HEK293 (cell line): ENCODE measurements at regions of chr11 and their contacts with region 1.

Region 1: DNA sequence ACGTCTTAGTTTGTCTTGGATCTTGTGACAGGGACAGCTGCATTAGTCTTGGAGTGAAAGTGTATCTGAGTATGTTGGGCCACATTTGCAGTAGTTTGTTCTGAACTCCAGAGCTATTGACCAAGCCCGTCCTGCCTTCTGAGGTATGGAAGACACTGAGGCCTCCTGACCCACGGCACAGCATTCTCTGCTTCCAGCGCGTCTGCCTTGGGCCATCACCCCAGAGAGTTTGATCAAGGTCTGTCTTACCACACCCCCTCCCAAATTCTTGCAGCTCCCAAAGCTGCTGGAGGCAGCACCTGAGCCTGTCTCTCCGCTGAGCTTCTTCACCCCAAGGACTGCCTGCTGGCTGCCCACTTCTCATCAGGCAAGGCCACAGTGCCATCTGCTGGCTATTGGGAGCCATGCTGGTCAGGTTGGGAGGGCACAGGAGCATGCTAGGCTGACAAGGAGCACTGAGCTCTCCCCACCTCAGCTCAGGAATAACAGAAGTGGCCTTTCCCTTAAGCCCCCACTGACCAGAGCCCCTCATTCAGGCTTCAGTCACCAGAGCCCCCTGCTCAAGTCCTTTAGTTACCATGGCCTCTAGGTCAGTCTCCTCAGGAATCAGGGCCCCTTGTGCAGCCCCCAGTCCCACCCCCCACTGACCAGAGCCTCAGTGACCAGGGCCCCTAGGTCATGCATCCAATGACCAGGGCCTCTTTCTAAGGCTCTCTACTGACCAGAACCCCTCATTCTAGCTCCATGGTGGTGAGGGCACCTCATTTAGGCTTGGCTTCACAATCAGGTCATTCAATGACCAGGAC is 27.2 kb upstream of the SMPD1 start:
- H3K4me3 ChIP-seq: no peak overlapping the region
- H3K27ac ChIP-seq: no peak overlapping the region
- H3K4me1 ChIP-seq: no peaks in the 10 kb centered on the region
- CTCF ChIP-seq: peak; percentile 64

Region 2: DNA sequence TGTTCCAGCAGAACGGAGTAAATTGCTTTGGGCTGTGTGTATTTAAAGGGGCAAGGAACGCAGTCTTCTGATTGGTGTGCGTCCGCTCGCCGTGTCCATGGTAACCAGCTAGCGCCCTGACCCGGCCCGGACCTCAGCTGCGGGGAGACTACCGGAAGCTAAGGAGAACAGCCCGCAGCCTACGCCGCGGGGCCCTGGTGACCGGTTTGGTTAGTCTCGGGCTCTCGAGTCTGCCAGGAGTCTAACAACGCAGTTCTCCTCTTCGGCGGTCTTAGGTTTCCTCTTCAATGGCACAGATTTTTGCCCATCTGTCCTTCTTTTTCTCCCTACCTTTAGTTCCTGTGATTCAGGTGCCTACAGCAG is 424.5 kb before region 1 on chr11:
- CTCF ChIA-PET with region 1: no interaction called
- POLR2A ChIA-PET with region 1: no interaction called
- H3K4me3 ChIP-seq: no peak overlapping the region
- H3K27ac ChIP-seq: no peak overlapping the region
- H3K4me1 ChIP-seq: no peaks in the 10 kb centered on the region
- CTCF ChIP-seq: no peak

Region 3: DNA sequence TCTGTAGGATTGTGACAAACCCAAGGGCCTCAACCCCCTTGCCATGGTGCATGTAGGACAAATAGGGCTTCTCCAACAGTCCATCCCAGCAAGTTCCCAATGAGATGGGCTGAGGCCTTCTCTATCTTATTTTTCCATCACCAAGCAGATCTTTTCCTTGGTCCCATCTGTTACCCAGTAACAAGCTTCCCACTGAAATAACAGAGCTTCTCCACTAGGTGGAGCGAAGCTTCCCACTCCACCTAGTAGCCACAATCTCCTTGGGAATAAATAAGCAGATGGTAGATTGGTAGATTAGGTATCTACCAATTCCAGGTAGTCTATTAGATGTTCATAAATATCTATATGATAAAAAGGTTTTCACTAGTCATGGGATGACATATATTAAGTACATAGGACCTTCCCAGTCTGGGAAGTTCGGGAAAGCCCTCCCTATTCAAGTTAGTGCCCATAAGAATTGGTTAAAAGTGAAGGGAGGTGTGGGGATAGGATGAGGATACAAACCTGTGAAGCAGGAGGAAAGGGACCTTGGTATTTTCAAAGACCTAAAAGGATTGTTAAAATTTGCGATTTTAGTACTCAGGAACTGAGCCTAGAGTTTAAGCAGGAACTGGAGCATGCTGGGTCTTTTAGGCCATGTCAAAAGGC is 370.3 kb before region 1 on chr11:
- CTCF ChIA-PET with region 1: interaction called, 16 read pairs
- POLR2A ChIA-PET with region 1: no interaction called
- H3K4me3 ChIP-seq: no peak overlapping the region
- H3K27ac ChIP-seq: no peak overlapping the region
- H3K4me1 ChIP-seq: no peaks in the 10 kb centered on the region
- CTCF ChIP-seq: no peak

Region 4: DNA sequence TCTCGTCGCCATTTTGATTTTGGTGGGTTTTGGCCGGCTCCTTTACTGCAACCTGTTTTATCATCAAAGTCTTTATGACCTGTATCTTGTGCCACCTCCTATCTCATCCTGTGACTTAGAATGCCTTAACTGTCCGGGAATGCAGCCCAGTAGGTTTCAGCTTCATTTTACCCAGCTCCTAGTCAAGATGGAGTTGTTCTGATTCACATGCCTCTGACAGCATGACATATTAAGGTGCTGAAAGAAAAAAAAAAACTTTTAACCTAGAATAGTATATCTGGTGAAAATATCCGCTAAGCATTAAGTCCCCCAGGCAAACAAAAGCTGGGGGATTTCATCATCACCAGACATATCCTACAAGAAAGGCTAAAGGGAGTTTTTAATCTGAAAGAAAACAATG is 202.0 kb before region 1 on chr11:
- CTCF ChIA-PET with region 1: no interaction called
- POLR2A ChIA-PET with region 1: no interaction called
- H3K4me3 ChIP-seq: no peak overlapping the region
- H3K27ac ChIP-seq: no peak overlapping the region
- H3K4me1 ChIP-seq: no peaks in the 10 kb centered on the region
- CTCF ChIP-seq: no peak

Region 5: GRCh38 chr11:6206456-6207180 is 156.5 kb before region 1 on chr11:
- CTCF ChIA-PET with region 1: interaction called, 11 read pairs
- POLR2A ChIA-PET with region 1: no interaction called
- H3K4me3 ChIP-seq: no peak overlapping the region
- H3K27ac ChIP-seq: no peak overlapping the region
- H3K4me1 ChIP-seq: no peaks in the 10 kb centered on the region
- CTCF ChIP-seq: no peak

Region 6: DNA sequence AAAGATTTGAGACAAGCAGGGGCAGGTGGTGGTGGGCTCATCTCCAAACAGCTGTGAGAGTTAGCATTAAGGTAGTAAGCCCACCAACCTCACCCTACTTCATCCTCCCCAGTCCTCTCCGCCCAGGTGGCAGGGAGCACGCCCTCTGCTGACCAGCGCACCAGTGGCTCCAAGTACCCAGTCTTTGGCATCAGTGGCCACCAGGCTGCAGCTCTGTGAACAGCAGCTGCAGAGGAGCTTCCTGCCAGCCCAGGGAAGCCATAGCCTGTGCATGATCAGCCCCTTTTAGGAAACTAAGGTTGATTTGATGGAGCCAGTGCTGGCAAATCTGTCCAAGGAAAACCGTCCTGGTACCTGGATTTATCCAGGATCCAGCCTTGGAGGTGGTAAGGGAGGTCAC is 64.5 kb before region 1 on chr11:
- CTCF ChIA-PET with region 1: interaction called, 17 read pairs
- POLR2A ChIA-PET with region 1: no interaction called
- H3K4me3 ChIP-seq: no peak overlapping the region
- H3K27ac ChIP-seq: no peak overlapping the region
- H3K4me1 ChIP-seq: no peaks in the 10 kb centered on the region
- CTCF ChIP-seq: peak; percentile 48

Region 7: DNA sequence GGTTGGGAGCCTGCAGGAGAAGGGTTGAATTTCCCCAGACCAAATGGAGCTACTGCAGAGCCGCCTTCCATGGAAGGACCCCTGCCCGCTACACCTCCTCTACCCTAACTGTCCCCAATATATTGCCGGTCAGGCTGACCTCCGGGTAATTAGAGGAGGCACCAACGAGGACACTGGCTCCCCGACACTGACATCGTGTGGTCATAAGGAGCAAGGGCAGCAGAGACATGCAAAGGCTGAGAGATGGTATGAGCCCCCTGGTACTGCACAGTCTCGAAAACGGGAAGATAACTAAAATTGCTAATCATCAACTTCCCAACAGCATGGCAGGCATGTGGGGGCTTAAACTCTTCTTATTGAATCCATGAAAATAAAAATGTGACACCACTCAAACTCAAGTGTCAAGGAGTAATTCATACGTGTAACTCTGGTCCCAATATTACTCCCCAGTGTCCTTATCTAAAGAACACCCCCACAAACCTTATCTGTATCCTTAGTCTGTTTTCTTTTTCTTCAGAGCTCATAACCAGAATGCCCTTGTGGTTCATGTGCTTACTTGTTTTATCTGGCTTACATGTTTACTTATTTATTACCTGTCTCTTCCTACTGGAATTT is 47.2 kb before region 1 on chr11:
- CTCF ChIA-PET with region 1: interaction called, 26 read pairs
- POLR2A ChIA-PET with region 1: no interaction called
- H3K4me3 ChIP-seq: no peak overlapping the region
- H3K27ac ChIP-seq: no peak overlapping the region
- H3K4me1 ChIP-seq: no peaks in the 10 kb centered on the region
- CTCF ChIP-seq: peak; percentile 39; the same call in 1 of the 2 replicates

Region 8: GRCh38 chr11:6443269-6444003 is 80.4 kb after region 1 on chr11:
- CTCF ChIA-PET with region 1: interaction called, 11 read pairs
- POLR2A ChIA-PET with region 1: no interaction called
- H3K4me3 ChIP-seq: no peak overlapping the region
- H3K27ac ChIP-seq: no peak overlapping the region
- H3K4me1 ChIP-seq: no peaks in the 10 kb centered on the region
- CTCF ChIP-seq: 0 out of 2 replicates have a peak, but pooled peaks have one; percentile 25

Region 9: GRCh38 chr11:6489306-6489705 is 126.2 kb after region 1 on chr11:
- CTCF ChIA-PET with region 1: no interaction called
- POLR2A ChIA-PET with region 1: no interaction called
- H3K4me3 ChIP-seq: no peak overlapping the region
- H3K27ac ChIP-seq: no peak overlapping the region
- H3K4me1 ChIP-seq: no peaks in the 10 kb centered on the region
- CTCF ChIP-seq: no peak